A673 (cell line): ENCODE measurements at regions of chr20 and their contacts with region 1.

Region 1: GRCh38 chr20:49846206-49846807 is 33.7 kb downstream of the SLC9A8 start:
- DNase-seq: peak; percentile 76
- H3K4me3 ChIP-seq: no peak overlapping the region
- H3K27ac ChIP-seq: no peak overlapping the region
- H3K4me1 ChIP-seq: peaks cover 6% of the 10 kb centered on the region
- H3K27me3 ChIP-seq: no peaks in the 10 kb centered on the region
- CTCF ChIP-seq: peak; percentile 73

Region 2: GRCh38 chr20:49559401-49560081 is 286.8 kb before region 1 on chr20:
- CTCF ChIA-PET with region 1: no interaction called
- POLR2A ChIA-PET with region 1: no interaction called
- intact Hi-C with region 1: loop called (anchors 5 kb)
- DNase-seq: no peak
- H3K4me3 ChIP-seq: no peak overlapping the region
- H3K27ac ChIP-seq: no peak overlapping the region
- H3K4me1 ChIP-seq: no peaks in the 10 kb centered on the region
- H3K27me3 ChIP-seq: peaks cover 33% of the 10 kb centered on the region
- CTCF ChIP-seq: no peak

Region 3: GRCh38 chr20:49610701-49611538 is 235.4 kb before region 1 on chr20:
- CTCF ChIA-PET with region 1: interaction called, 15 read pairs
- POLR2A ChIA-PET with region 1: no interaction called
- intact Hi-C with region 1: loop called (anchors 1 kb)
- DNase-seq: peak; percentile 77
- H3K4me3 ChIP-seq: peak overlapping the region; percentile 32
- H3K27ac ChIP-seq: no peak overlapping the region
- H3K4me1 ChIP-seq: no peaks in the 10 kb centered on the region
- H3K27me3 ChIP-seq: no peaks in the 10 kb centered on the region
- CTCF ChIP-seq: peak; percentile 99

Region 4: GRCh38 chr20:50003253-50003656 is 156.9 kb after region 1 on chr20:
- CTCF ChIA-PET with region 1: no interaction called
- POLR2A ChIA-PET with region 1: no interaction called
- intact Hi-C with region 1: no loop called
- DNase-seq: peak; percentile 43
- H3K4me3 ChIP-seq: no peak overlapping the region
- H3K27ac ChIP-seq: no peak overlapping the region
- H3K4me1 ChIP-seq: no peaks in the 10 kb centered on the region
- H3K27me3 ChIP-seq: no peaks in the 10 kb centered on the region
- CTCF ChIP-seq: no peak

Region 5: GRCh38 chr20:51828467-51829161 is 1982.3 kb after region 1 on chr20:
- CTCF ChIA-PET with region 1: no interaction called
- POLR2A ChIA-PET with region 1: interaction called, 12 read pairs
- intact Hi-C with region 1: no loop called
- DNase-seq: no peak
- H3K4me3 ChIP-seq: no peak overlapping the region
- H3K27ac ChIP-seq: no peak overlapping the region
- H3K4me1 ChIP-seq: no peaks in the 10 kb centered on the region
- H3K27me3 ChIP-seq: no peaks in the 10 kb centered on the region
- CTCF ChIP-seq: no peak